Vagina (tissue), 2 donors: ENCODE measurements at regions of chr19 and their contacts with region 1.

Region 1: DNA sequence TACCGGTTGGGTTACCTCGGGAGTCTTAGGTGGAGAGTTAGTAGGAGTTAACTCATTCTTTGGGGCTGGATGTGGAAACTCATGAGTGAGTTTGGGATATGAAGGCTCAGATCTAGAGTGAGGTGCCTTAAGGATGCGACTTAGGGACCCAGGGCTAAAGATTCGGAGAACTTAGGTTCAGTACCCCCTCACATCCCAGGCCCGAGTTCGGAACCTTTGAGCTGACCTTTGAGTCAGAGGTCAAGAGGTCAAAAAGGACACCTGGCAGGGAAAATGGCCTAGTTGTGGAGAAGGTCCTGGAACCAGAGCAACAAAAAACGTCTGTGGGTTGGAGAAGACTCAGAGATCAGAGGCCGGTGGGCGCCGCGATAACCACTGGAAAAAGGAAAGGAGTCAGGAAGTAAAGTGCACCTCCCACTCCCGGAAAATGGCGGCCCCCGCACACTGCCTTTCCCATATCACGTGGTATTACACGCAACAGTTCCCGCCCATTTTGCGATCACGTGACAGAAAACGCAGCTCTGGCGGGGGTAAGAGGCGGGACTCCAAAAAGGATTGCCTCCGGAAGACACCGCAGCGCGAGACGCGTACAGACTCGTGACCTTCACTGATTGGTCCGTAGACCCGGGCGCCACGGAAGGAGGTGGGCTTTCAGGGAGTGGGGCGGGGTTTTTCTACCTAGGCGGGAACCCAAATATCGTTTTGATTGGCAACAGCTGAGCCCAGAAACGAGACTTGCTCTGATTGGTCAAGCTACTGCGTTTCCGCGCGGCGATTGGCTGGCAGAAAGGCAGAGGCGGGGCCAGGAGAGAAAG is at the start of gene ACTMAP:
- DNase-seq: peak; percentile 100
- H3K4me3 ChIP-seq: peak within 1 kb of the TSS; percentile 68 to 73
- H3K27ac ChIP-seq: peak within 1 kb of the TSS; percentile 92
- H3K4me1 ChIP-seq: peaks cover 45% of the 10 kb centered on the region
- H3K27me3 ChIP-seq: no peaks in the 10 kb centered on the region
- CTCF ChIP-seq: no peak
- POLR2A ChIP-seq: peak; percentile 76 to 88
- total RNA-seq, gene ACTMAP: 2.2 TPM

Region 2: GRCh38 chr19:40006273-40006691 is 744.0 kb before region 1 on chr19:
- intact Hi-C with region 1: no loop called
- DNase-seq: no peak
- H3K4me3 ChIP-seq: no peak overlapping the region
- H3K27ac ChIP-seq: no peak overlapping the region
- H3K4me1 ChIP-seq: no peaks in the 10 kb centered on the region
- H3K27me3 ChIP-seq: no peaks in the 10 kb centered on the region
- CTCF ChIP-seq: no peak
- POLR2A ChIP-seq: no peak

Region 3: DNA sequence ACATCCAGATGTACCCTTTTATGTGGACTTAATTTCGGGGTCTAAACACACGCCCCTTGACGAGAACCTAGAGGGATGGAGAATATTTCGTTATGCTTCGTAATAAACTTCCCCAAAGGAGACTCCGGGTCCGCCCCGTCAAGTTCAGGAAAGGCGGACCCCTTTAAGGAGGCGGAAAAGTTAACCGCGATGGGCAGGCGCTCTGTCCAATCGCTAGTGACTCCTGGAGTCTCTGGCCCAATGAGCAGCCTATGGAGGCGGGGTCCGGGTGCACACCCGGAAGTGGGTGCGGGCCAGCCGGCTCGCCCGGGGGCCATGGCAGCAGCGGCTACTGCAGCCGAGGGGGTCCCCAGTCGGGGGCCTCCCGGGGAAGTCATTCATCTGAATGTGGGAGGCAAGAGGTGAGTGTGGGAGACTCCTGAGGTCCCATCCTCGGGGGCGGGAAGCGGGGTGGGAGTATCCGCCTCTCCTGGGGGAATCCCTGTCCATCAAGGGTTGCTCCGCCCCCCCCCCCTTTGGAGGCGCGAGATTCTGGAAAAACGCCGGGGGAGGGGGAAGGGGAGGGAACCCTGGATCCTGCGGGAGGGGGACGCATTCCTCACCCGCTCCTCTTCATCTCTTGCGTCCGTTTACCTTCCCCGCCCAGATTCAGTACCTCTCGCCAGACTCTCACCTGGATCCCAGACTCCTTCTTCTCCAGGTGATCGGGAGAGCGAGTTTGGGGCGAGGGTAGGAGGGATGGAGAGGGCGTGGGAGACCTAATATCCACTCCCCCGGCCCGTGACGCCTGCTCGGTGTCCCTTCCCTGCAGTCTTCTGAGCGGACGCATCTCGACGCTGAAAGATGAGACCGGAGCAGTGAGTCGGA is 173.4 kb before region 1 on chr19 and contains the start of gene SHKBP1:
- intact Hi-C with region 1: no loop called
- DNase-seq: no peak
- H3K4me3 ChIP-seq: peak within 1 kb of the TSS; percentile 68 to 78
- H3K27ac ChIP-seq: peak within 1 kb of the TSS; percentile 68
- H3K4me1 ChIP-seq: peaks cover 22% of the 10 kb centered on the region
- H3K27me3 ChIP-seq: no peaks in the 10 kb centered on the region
- CTCF ChIP-seq: no peak
- POLR2A ChIP-seq: no peak
- total RNA-seq, gene SHKBP1: 51.6 TPM

Region 4: GRCh38 chr19:40716655-40717324 is 33.5 kb before region 1 on chr19 and contains the starts of genes COQ8B and ITPKC:
- intact Hi-C with region 1: no loop called
- DNase-seq: peak; percentile 98 to 99
- H3K4me3 ChIP-seq: peak within 1 kb of the TSS; percentile 63 to 92
- H3K27ac ChIP-seq: peak within 1 kb of the TSS; percentile 99
- H3K4me1 ChIP-seq: peaks cover 76% of the 10 kb centered on the region
- H3K27me3 ChIP-seq: no peaks in the 10 kb centered on the region
- CTCF ChIP-seq: no peak
- POLR2A ChIP-seq: peak in 1 of 2 donors; percentile 77
- total RNA-seq, gene COQ8B: 51.1 TPM
- total RNA-seq, gene ITPKC: 92.6 TPM

Region 5: GRCh38 chr19:40785526-40785925 is 35.3 kb after region 1 on chr19:
- intact Hi-C with region 1: no loop called
- DNase-seq: no peak
- H3K4me3 ChIP-seq: no peak overlapping the region
- H3K27ac ChIP-seq: no peak overlapping the region
- H3K4me1 ChIP-seq: no peaks in the 10 kb centered on the region
- H3K27me3 ChIP-seq: no peaks in the 10 kb centered on the region
- CTCF ChIP-seq: no peak
- POLR2A ChIP-seq: no peak

Region 6: GRCh38 chr19:40806488-40807468 is 56.5 kb after region 1 on chr19:
- intact Hi-C with region 1: loop called (anchors 10 kb)
- DNase-seq: no peak
- H3K4me3 ChIP-seq: peak overlapping the region; percentile 17 to 21
- H3K27ac ChIP-seq: peak overlapping the region; percentile 64
- H3K4me1 ChIP-seq: peaks cover 92% of the 10 kb centered on the region
- H3K27me3 ChIP-seq: no peaks in the 10 kb centered on the region
- CTCF ChIP-seq: peak; percentile 60 to 89 (median 82)
- POLR2A ChIP-seq: no peak